GM12878 (cell line): ENCODE measurements at regions of chr7 and their contacts with region 1.

Region 1: DNA sequence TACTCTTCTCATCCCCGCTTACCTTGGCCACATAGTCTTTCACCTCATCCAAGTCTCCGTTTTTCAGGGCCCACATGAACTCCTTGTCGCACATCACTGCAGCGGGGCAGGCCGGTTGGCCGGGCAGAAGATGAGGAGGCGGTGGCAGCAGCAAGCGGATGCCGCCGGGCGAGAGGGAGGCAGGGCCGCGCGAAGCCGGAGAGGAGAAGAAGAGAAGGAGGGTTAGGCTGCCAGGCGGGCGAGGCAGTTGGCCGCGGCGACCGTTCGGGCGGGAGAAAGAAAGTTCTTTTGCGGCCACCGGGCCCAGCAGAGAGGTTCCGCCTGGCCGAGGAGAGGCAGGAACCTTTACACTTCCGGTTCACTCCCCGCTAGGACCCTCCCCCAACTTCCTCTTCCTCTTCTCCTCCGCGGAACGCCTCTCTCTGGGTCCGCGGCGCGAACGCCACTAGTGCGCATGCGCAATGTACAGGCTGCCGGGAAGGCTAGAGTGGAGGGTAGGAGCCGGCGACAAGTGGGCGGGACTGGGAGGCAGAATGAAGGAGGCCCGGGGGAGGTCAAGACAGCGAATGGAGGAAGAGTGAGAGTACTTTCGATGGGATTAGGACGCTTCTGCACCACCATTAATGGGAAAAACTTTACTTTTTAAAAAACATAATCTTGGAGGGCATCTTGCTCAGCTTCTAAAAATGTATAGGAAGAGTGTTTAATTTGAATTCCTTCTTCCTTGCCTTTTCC is at the start of gene MTPN:
- DNase-seq: peak; percentile 90
- ATAC-seq: peak; percentile 73
- H3K4me3 ChIP-seq: peak within 1 kb of the TSS; percentile 97
- H3K27ac ChIP-seq: peak within 1 kb of the TSS; percentile 96
- H3K4me1 ChIP-seq: peaks cover 32% of the 10 kb centered on the region
- H3K27me3 ChIP-seq: no peaks in the 10 kb centered on the region
- CTCF ChIP-seq: no peak
- EP300 ChIP-seq: no peak
- POLR2A ChIP-seq: peak; percentile 81
- RAD21 ChIP-seq: no peak
- polyA plus RNA-seq, gene MTPN: 38.7 to 48.5 TPM

Region 2: GRCh38 chr7:135320277-135320676 is 656.9 kb before region 1 on chr7:
- CTCF ChIA-PET with region 1: no interaction called
- POLR2A ChIA-PET with region 1: no interaction called
- RAD21 ChIA-PET with region 1: no interaction called
- SMC1A ChIA-PET with region 1: no interaction called
- in situ Hi-C with region 1: no loop called
- intact Hi-C with region 1: no loop called
- DNase-seq: no peak
- ATAC-seq: no peak
- H3K4me3 ChIP-seq: no peak overlapping the region
- H3K27ac ChIP-seq: no peak overlapping the region
- H3K4me1 ChIP-seq: no peaks in the 10 kb centered on the region
- H3K27me3 ChIP-seq: no peaks in the 10 kb centered on the region; a peak in 1 of 4 replicates
- CTCF ChIP-seq: no peak
- EP300 ChIP-seq: no peak
- POLR2A ChIP-seq: no peak
- RAD21 ChIP-seq: no peak

Region 3: GRCh38 chr7:135509903-135510602 is 467.1 kb before region 1 on chr7 and contains the start of gene CNOT4:
- CTCF ChIA-PET with region 1: no interaction called
- POLR2A ChIA-PET with region 1: no interaction called
- RAD21 ChIA-PET with region 1: no interaction called
- SMC1A ChIA-PET with region 1: no interaction called
- in situ Hi-C with region 1: no loop called
- intact Hi-C with region 1: loop called (anchors 10 kb)
- DNase-seq: peak; percentile 82
- ATAC-seq: peak; percentile 93
- H3K4me3 ChIP-seq: peak within 1 kb of the TSS; percentile 94
- H3K27ac ChIP-seq: peak within 1 kb of the TSS; percentile 97
- H3K4me1 ChIP-seq: no peaks in the 10 kb centered on the region
- H3K27me3 ChIP-seq: no peaks in the 10 kb centered on the region
- CTCF ChIP-seq: no peak
- EP300 ChIP-seq: no peak
- POLR2A ChIP-seq: peak; percentile 89
- RAD21 ChIP-seq: no peak
- polyA plus RNA-seq, gene CNOT4: 11.3 to 29.6 TPM

Region 4: DNA sequence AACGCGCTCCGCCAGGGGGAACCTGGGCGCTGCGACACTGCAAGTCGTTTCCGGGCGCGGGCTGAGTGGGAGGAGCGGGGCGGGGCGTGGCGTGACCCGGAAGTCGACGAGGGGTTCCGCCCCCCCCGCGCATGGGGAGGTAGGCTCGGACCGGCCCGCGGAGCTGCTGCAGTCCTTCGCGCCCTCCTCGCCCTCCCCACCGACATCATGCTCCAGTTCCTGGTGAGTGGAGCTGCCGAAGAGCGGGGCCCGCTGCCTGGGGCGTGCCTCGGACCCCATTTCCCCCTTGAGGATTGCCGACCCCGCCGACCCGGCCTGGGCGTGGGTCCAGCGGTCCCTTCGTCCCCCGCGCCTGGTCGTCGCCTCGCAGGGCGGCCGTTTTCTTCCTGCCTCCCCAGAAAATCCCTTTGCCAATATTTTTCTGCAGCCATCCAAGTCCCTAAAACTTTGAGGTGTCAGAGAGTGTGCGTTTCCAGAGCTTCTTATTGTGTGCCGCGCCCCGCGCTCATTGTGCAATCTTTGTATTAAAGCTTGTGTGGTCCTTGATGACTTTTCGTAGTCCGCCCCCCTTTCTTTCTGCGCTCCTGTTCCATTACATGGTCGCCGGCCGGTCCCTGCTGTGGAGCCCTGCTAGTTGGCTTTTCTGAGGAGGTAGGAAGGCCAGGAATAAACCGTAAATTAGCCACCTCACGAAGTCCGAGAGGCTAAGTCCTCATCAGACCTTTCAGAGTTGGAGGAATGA is 314.6 kb before region 1 on chr7 and contains the start of gene STMP1:
- CTCF ChIA-PET with region 1: no interaction called
- POLR2A ChIA-PET with region 1: interaction called, 4 read pairs
- RAD21 ChIA-PET with region 1: no interaction called
- SMC1A ChIA-PET with region 1: interaction called, 3 read pairs
- in situ Hi-C with region 1: loop called (anchors 10 kb)
- intact Hi-C with region 1: loop called (anchors 10 kb)
- DNase-seq: peak; percentile 66
- ATAC-seq: peak; percentile 93
- H3K4me3 ChIP-seq: peak within 1 kb of the TSS; percentile 100
- H3K27ac ChIP-seq: peak within 1 kb of the TSS; percentile 68
- H3K4me1 ChIP-seq: peaks cover 2% of the 10 kb centered on the region; the same call in 1 of the 2 replicates
- H3K27me3 ChIP-seq: no peaks in the 10 kb centered on the region
- CTCF ChIP-seq: peak in 2 of 3 experiments; percentile 74 to 78; a peak in 4 of 6 replicates
- EP300 ChIP-seq: 0 out of 4 replicates have a peak, but pooled peaks of 1 of the 2 experiments have one; percentile 22
- POLR2A ChIP-seq: peak; percentile 97
- RAD21 ChIP-seq: peak; percentile 47
- polyA plus RNA-seq, gene STMP1: 63.3 to 79.9 TPM

Region 5: GRCh38 chr7:135942614-135943013 is 34.6 kb before region 1 on chr7:
- CTCF ChIA-PET with region 1: interaction called, 4 read pairs
- POLR2A ChIA-PET with region 1: interaction called, 4 read pairs
- RAD21 ChIA-PET with region 1: interaction called, 22 read pairs
- SMC1A ChIA-PET with region 1: interaction called, 19 read pairs
- in situ Hi-C with region 1: no loop called
- intact Hi-C with region 1: loop called (anchors 5 kb)
- DNase-seq: no peak
- ATAC-seq: peak; percentile 78
- H3K4me3 ChIP-seq: no peak overlapping the region; the same call in 1 of the 2 replicates
- H3K27ac ChIP-seq: no peak overlapping the region
- H3K4me1 ChIP-seq: peaks cover 20% of the 10 kb centered on the region
- H3K27me3 ChIP-seq: no peaks in the 10 kb centered on the region
- CTCF ChIP-seq: no peak
- EP300 ChIP-seq: peak in 1 of 2 experiments; percentile 80; a peak in 2 of 4 replicates
- POLR2A ChIP-seq: no peak
- RAD21 ChIP-seq: no peak

Region 6: DNA sequence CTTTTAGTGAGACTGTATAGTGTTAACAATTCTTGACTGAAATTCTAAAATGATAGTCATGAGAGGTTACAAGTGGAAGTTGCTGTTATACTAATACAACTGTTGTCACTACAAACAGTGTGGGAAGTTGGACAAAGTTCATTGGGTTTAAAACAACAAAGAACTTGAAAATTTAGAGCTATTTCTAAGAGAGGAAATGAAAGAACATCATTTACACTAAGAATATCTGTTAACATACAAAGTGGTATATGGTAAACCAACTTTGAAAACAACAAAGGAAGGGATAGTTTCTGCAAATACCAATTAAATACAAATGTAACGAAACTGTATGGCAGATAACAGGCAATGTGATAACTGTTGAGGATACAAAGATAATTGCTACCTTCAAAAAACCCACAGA is 11.6 kb before region 1 on chr7:
- CTCF ChIA-PET with region 1: interaction called, 10 read pairs
- POLR2A ChIA-PET with region 1: interaction called, 27 read pairs
- RAD21 ChIA-PET with region 1: interaction called, 20 read pairs
- SMC1A ChIA-PET with region 1: interaction called, 35 read pairs
- in situ Hi-C with region 1: no loop called
- intact Hi-C with region 1: no loop called
- DNase-seq: peak; percentile 37
- ATAC-seq: peak; percentile 62
- H3K4me3 ChIP-seq: no peak overlapping the region; the same call in 1 of the 2 replicates
- H3K27ac ChIP-seq: peak overlapping the region; percentile 31; the same call in 1 of the 2 replicates
- H3K4me1 ChIP-seq: peaks cover 7% of the 10 kb centered on the region; the same call in 1 of the 2 replicates
- H3K27me3 ChIP-seq: no peaks in the 10 kb centered on the region
- CTCF ChIP-seq: no peak
- EP300 ChIP-seq: peak; percentile 62 to 75; a peak in 2 of 4 replicates
- POLR2A ChIP-seq: no peak
- RAD21 ChIP-seq: no peak

Region 7: DNA sequence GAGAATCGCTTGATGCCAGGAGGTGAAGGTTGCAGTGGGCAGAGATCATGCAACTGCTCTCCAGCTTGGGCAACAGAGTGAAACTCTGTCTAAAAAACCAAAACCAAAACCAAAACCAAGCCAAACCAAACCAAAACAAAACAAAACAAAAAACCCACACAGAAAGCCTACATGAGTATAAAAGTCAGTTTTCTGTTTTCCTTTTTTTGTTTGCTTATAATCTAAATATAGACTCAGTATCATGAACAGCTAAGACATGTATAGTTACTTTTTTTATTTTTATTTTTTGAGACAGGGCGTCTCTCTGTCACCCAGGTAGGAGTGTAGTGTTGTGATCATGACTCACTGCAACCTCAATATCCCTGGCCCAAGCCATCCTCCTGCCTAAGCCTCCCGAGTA is 16.8 kb after region 1 on chr7:
- CTCF ChIA-PET with region 1: interaction called, 5 read pairs
- POLR2A ChIA-PET with region 1: no interaction called
- RAD21 ChIA-PET with region 1: interaction called, 4 read pairs
- SMC1A ChIA-PET with region 1: interaction called, 13 read pairs
- in situ Hi-C with region 1: no loop called
- intact Hi-C with region 1: no loop called
- DNase-seq: no peak
- ATAC-seq: peak; percentile 84
- H3K4me3 ChIP-seq: no peak overlapping the region
- H3K27ac ChIP-seq: no peak overlapping the region
- H3K4me1 ChIP-seq: peaks cover 3% of the 10 kb centered on the region
- H3K27me3 ChIP-seq: no peaks in the 10 kb centered on the region
- CTCF ChIP-seq: no peak
- EP300 ChIP-seq: no peak
- POLR2A ChIP-seq: no peak
- RAD21 ChIP-seq: no peak

Region 8: GRCh38 chr7:136033413-136034031 is 56.3 kb after region 1 on chr7:
- CTCF ChIA-PET with region 1: no interaction called
- POLR2A ChIA-PET with region 1: no interaction called
- RAD21 ChIA-PET with region 1: no interaction called
- SMC1A ChIA-PET with region 1: no interaction called
- in situ Hi-C with region 1: no loop called
- intact Hi-C with region 1: no loop called
- DNase-seq: no peak
- ATAC-seq: no peak
- H3K4me3 ChIP-seq: no peak overlapping the region
- H3K27ac ChIP-seq: no peak overlapping the region
- H3K4me1 ChIP-seq: peaks cover 4% of the 10 kb centered on the region
- H3K27me3 ChIP-seq: no peaks in the 10 kb centered on the region
- CTCF ChIP-seq: no peak
- EP300 ChIP-seq: no peak
- POLR2A ChIP-seq: no peak
- RAD21 ChIP-seq: no peak

Region 9: GRCh38 chr7:136359333-136359903 is 382.2 kb after region 1 on chr7:
- CTCF ChIA-PET with region 1: no interaction called
- POLR2A ChIA-PET with region 1: no interaction called
- RAD21 ChIA-PET with region 1: no interaction called
- SMC1A ChIA-PET with region 1: no interaction called
- in situ Hi-C with region 1: no loop called
- intact Hi-C with region 1: loop called (anchors 1 kb)
- DNase-seq: peak; percentile 84
- ATAC-seq: peak; percentile 97
- H3K4me3 ChIP-seq: no peak overlapping the region
- H3K27ac ChIP-seq: no peak overlapping the region; the same call in 1 of the 2 replicates
- H3K4me1 ChIP-seq: peaks cover 9% of the 10 kb centered on the region; the same call in 1 of the 2 replicates
- H3K27me3 ChIP-seq: no peaks in the 10 kb centered on the region
- CTCF ChIP-seq: no peak
- EP300 ChIP-seq: peak; percentile 77 to 88
- POLR2A ChIP-seq: no peak
- RAD21 ChIP-seq: no peak